ENCODE measurements at regions of chr6 and their contacts with region 1.

Region 1: DNA sequence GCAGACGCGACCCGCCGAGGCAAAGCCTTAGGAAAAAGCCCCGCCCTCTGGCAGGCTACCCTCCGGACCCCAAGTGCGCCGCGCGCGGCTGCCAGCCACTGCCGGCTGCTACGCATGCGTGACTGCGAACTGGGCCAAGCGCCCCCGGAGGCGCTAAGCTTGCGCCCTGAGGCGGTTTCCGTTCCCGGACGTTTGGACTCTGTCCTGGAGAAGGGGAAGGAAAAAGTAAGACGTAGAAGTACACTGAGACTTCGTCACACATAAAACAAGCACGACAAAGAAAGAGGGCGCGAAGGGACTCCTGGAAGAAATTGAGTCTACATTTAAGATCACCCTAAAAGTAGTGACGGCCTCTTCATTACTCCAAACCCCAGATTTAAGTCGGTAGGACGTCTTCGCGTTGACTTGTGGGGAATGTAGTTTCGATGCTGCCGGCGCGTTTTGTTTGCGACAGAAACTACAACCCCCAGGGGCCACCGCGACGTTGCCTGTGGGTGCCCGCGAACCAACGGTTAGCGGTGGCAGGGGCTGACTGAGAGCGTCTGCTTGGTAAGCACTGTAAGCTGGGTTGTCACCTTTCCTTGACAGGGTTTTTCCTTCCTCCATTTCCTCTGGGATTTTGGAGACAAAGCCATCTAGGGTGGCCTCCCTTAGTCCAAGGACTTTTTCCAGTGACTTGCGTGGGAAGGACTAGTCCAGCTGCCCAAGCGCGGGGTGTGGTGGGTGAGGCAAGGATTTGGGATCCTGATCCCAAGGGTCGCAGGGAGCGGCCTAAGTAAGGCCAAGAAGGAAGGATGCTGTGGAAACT is at the start of gene CEP57L1:
- DNase-seq: peak; percentile 98
- H3K4me3 ChIP-seq: peak within 1 kb of the TSS; percentile 65
- H3K27ac ChIP-seq: peak within 1 kb of the TSS; percentile 86
- H3K4me1 ChIP-seq: peaks cover 10% of the 10 kb centered on the region
- H3K27me3 ChIP-seq: no peaks in the 10 kb centered on the region
- CTCF ChIP-seq: no peak
- total RNA-seq, gene CEP57L1: 10.2 to 13.1 TPM

Region 2: GRCh38 chr6:107957909-107958688 is 1137.1 kb before region 1 on chr6 and contains the start of gene SEC63:
- intact Hi-C with region 1: loop called (anchors 10 kb)
- DNase-seq: peak; percentile 98
- H3K4me3 ChIP-seq: peak within 1 kb of the TSS; percentile 93
- H3K27ac ChIP-seq: peak within 1 kb of the TSS; percentile 93
- H3K4me1 ChIP-seq: peaks cover under 1% of the 10 kb centered on the region
- H3K27me3 ChIP-seq: no peaks in the 10 kb centered on the region
- CTCF ChIP-seq: no peak
- total RNA-seq, gene SEC63: 65.3 to 84.3 TPM

Region 3: DNA sequence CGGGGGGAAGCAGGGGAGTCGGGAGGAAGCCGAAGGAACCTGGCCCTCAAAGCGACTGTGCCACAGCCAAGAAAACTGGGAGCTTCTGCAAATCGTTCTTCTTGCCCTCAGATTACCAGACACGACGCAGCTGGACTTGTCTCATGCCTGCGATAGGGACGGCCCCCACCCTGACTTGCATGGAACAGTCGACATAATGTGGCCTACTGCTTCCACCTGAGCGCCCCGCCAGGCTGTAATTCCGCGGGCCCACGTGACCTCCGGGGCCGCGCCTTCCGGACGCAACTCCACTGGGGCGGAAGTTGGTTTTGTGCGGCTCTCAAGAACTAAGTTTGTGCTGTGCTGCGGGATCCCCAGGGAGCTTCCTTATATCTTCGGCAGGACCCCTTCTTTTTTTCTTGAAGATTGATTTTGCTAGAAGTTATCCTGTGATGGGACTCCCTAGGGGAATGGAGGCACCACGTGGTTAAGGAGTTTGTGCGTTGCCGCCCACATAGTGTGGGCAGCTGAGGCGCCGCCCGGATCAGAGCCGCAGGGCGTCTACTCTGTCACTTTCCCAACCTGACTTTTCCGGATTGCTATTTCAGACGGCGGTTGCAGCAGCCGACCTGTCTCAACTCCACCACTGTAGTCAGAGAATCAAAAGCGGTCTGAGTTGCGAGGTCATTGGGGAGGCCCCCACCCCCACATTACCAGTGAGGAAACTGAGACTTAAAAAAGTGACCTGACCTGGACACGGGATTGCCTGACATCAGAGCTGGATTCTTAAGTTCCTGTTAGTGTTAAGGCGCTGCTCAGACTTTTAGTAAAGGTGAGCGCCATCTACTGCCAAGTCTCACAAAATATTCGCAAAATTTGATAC is 287.6 kb after region 1 on chr6:
- intact Hi-C with region 1: loop called (anchors 10 kb)
- DNase-seq: peak; percentile 94
- H3K4me3 ChIP-seq: peak overlapping the region; percentile 81
- H3K27ac ChIP-seq: peak overlapping the region; percentile 100
- H3K4me1 ChIP-seq: peaks cover 5% of the 10 kb centered on the region
- H3K27me3 ChIP-seq: no peaks in the 10 kb centered on the region
- CTCF ChIP-seq: no peak

Measured in colonic mucosa (tissue), 4 donors.